ACHN (cell line): ENCODE measurements at regions of chr15 and their contacts with region 1.

Region 1: DNA sequence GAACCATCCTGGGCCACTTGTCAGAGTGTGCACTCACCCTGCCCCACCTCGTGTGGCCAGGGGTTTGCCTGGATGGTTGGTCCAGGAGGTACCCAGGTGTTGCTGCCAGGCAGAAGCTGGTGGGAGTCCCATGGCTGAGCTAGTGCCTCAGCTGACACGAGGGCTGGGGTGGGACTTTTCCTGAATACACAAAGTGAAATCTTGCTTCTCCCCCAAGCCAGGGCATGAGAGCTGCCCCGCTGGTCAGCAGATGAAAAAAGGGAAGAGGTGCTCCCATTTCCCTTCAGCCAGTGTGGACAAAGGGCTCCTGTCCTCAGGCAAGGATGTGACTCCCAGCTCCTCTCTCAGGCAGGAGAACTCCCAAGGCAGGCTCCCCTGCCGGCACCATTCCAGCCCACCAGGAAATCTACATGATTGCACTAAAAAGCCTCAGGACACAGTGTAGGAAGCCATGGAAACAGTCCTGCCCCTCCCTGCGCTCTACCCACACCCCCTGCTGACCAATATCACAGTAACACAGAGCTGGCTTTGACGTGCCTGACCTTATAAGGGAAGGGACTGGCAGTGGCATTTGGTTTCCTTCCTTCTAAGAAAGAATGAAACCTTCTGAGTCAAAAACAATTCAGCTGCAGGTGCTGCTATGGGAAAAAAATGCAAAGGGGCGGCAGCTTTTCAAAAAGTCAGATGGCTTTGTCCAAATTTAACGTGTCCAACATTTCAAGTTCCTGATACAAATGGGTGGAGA is 33.9 kb downstream of the MYO5C start:
- DNase-seq: no peak

Region 2: GRCh38 chr15:52039925-52040781 is 221.5 kb before region 1 on chr15:
- in situ Hi-C with region 1: no loop called
- DNase-seq: no peak

Region 3: DNA sequence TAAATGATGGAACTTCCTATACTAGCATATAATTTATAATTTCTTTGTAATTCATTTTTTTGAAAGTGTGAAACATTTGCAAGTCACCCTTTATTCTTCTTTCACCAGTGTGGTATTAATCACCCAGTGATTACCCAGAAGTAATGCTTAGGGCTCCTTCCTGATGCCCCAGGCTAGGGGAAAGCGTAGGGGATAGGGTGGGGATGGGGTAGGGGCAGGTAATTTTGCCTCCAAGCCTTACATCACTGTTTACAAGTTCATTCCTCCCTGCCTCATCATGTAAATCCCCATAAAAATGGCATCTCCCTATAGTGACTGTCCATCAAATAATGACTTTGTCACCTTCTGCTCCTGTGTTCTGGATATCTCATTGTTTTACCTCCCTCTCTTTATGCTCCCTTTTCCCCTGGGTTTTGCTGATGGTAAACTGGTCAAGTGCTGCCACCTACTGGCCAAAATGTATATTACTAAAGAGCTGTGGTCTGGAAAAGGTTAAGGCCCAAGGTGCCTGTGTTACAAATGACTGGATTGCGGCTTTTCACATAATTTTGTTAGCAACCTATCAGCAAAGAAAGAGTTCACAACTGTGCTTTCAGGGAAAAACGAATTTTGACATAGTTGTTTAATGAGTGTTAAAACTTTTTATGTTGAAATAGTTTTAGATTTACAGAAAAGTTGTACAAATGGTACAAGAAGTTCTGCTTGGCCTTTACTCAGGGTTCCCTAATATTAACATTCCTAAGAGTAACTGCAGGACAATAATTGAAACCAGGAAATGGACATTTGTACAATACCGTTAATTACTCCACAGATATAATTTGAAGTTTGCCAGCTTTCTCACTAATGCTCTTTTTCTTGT is 473.8 kb after region 1 on chr15:
- in situ Hi-C with region 1: loop called (anchors 25 kb)
- DNase-seq: peak; percentile 78